SK-N-SH (cell line): ENCODE measurements at regions of chr2 and their contacts with region 1.

Region 1: GRCh38 chr2:112121682-112122254 is 16.4 kb upstream of the FBLN7 start:
- DNase-seq: peak; percentile 29
- H3K4me3 ChIP-seq: no peak overlapping the region; a peak in 1 of 4 replicates
- H3K27ac ChIP-seq: no peak overlapping the region
- H3K4me1 ChIP-seq: no peaks in the 10 kb centered on the region
- H3K27me3 ChIP-seq: no peaks in the 10 kb centered on the region
- CTCF ChIP-seq: peak; percentile 68
- EP300 ChIP-seq: no peak
- RAD21 ChIP-seq: peak; percentile 70

Region 2: GRCh38 chr2:112108178-112108832 is 13.5 kb before region 1 on chr2:
- CTCF ChIA-PET with region 1: interaction called, 23 read pairs
- POLR2A ChIA-PET with region 1: no interaction called
- DNase-seq: no peak
- H3K4me3 ChIP-seq: no peak overlapping the region
- H3K27ac ChIP-seq: no peak overlapping the region
- H3K4me1 ChIP-seq: no peaks in the 10 kb centered on the region
- H3K27me3 ChIP-seq: no peaks in the 10 kb centered on the region
- CTCF ChIP-seq: no peak
- EP300 ChIP-seq: no peak
- RAD21 ChIP-seq: no peak

Region 3: GRCh38 chr2:112138159-112138773 is 16.5 kb after region 1 on chr2 and contains the start of gene FBLN7:
- CTCF ChIA-PET with region 1: interaction called, 12 read pairs
- POLR2A ChIA-PET with region 1: no interaction called
- DNase-seq: peak; percentile 86
- H3K4me3 ChIP-seq: peak within 1 kb of the TSS; percentile 58 to 64
- H3K27ac ChIP-seq: peak within 1 kb of the TSS in 1 of 2 experiments; percentile 71; a peak in 2 of 4 replicates
- H3K4me1 ChIP-seq: peaks cover 0 to 7% of the 10 kb centered on the region in 2 experiments; a peak in 1 of 4 replicates
- H3K27me3 ChIP-seq: no peaks in the 10 kb centered on the region
- CTCF ChIP-seq: no peak
- EP300 ChIP-seq: no peak
- RAD21 ChIP-seq: no peak
- polyA plus RNA-seq, gene FBLN7: 1.8 and 4.4 TPM in 2 replicates